GM10248 (cell line): ENCODE measurements at regions of chr5 and their contacts with region 1.

Region 1: DNA sequence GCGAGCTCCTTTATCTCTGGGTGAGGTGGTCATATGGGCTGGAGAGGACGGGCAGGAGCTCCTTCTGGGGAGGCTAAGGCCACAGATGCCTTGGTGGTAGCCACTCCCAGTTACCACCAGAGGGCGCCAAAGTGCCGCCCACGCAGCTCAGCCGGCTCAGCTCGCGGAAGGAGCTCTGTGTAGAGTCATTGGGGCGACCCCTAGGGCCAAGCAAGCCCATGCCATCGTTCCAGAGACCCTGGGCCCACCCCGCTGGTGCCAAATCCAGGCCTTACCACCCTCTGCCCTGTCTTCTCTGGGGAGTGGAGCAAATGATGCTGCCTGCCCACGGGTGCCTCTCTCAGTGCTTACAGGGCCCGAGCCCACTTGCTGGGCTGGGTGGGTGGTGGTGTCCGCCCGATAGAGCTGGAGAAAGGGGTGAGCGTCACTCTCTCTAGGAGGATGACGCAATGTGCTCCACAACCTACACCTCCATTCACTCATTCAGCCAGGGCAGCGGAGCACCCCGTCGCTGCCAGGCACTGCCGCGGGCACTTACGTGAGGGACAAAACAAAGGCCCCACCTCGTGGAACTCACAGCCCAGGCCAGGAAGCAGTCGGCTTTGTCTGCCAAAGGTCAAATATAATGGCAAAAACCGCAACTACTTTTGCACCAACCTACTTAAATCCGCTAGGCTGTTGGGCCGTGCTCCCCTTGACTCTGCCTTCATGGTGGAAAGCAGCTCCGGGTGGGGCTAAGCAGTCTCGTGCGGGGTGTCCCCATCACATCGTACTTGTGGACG is 13.8 kb downstream of the TSPAN17 start:
- DNase-seq: peak; percentile 94
- CTCF ChIP-seq: peak; percentile 97

Region 2: DNA sequence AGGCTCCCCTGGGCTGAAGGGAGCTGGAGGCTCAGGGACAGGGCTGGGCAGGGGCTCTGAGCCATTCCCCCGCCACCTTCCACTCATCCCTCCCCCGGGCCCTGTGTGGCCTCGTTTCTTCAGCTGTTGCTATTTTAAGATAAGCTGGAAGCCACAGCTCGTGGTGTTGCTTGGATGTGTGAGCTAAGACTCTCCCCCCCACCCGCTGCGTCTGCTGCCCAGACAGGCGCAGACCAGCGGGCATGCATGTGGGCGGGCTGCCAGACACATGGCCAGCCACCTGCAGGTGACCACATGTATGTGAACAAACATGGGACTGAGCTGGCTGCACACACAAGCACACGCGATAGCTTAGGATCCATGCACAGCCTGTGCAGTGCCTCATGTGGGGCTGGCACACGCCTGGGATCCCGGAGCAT is 39.4 kb before region 1 on chr5:
- CTCF ChIA-PET with region 1: interaction called, 11 read pairs
- POLR2A ChIA-PET with region 1: no interaction called
- DNase-seq: no peak
- CTCF ChIP-seq: no peak

Region 3: DNA sequence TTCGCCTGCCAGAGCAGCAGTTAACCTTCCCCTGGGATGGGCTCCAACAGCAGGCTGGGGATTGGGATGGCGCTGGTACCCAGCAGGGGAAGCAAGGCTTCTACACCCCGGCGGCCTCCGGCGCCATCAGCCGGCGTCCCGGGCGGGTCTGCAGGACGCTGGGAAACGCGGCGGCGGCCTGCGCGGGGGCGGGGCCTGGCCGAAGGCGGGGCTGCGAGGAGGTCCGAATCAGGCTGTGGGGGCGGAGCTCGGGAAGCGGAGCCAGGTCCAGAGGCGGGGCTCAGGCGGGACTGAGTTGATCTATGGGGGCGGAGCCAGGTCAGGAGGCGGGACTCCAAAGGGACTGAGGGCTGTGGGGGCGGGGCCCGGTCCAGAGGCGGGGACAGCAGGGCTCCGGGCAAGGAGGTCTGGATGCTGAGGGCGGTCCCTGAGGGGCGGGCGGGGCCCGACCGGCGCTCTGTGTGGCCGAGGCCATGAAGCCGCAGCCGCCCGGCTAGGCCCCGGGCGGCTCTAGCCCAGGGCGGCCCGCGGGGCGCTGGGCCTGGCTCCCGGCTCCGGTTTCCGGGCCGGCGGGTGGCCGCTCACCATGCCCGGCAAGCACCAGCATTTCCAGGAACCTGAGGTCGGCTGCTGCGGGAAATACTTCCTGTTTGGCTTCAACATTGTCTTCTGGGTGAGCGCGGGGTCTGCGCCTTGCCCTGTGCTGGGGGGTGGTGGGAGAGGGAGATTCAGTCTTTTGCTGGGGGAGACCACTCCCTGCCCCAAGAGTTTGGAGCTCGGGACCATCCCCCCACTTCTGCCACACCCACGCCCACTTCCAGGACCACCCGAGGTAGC is 13.8 kb before region 1 on chr5 and contains the start of gene TSPAN17:
- CTCF ChIA-PET with region 1: interaction called, 140 read pairs
- POLR2A ChIA-PET with region 1: no interaction called
- DNase-seq: peak; percentile 100
- CTCF ChIP-seq: peak; percentile 50

Region 4: GRCh38 chr5:176818391-176819098 is 157.5 kb after region 1 on chr5:
- CTCF ChIA-PET with region 1: interaction called, 14 read pairs
- POLR2A ChIA-PET with region 1: no interaction called
- DNase-seq: peak; percentile 64
- CTCF ChIP-seq: no peak

Region 5: GRCh38 chr5:176959051-176959450 is 298.0 kb after region 1 on chr5:
- CTCF ChIA-PET with region 1: interaction called, 35 read pairs
- POLR2A ChIA-PET with region 1: no interaction called
- DNase-seq: peak; percentile 42
- CTCF ChIP-seq: peak; percentile 32

Region 6: GRCh38 chr5:177086924-177087706 is 426.1 kb after region 1 on chr5:
- CTCF ChIA-PET with region 1: interaction called, 21 read pairs
- POLR2A ChIA-PET with region 1: no interaction called
- DNase-seq: peak; percentile 85
- CTCF ChIP-seq: peak; percentile 69